ENCODE measurements at regions of chr16 and their contacts with region 1.

Region 1: GRCh38 chr16:785563-786535 is 2.3 kb downstream of the RPUSD1 start:
- DNase-seq: peak; percentile 48
- H3K27ac ChIP-seq: peak overlapping the region; percentile 76
- CTCF ChIP-seq: peak; percentile 86

Region 2: GRCh38 chr16:740764-741505 is 44.9 kb before region 1 on chr16 and contains the start of gene CIAO3:
- CTCF ChIA-PET with region 1: interaction called, 13 read pairs
- POLR2A ChIA-PET with region 1: no interaction called
- DNase-seq: peak; percentile 85
- H3K27ac ChIP-seq: peak within 1 kb of the TSS; percentile 81
- CTCF ChIP-seq: peak; percentile 94

Region 3: GRCh38 chr16:749001-749400 is 36.8 kb before region 1 on chr16:
- CTCF ChIA-PET with region 1: interaction called, 18 read pairs
- POLR2A ChIA-PET with region 1: interaction called, 6 read pairs
- DNase-seq: no peak
- H3K27ac ChIP-seq: peak overlapping the region; percentile 64
- CTCF ChIP-seq: no peak

Measured in RWPE1 (cell line).